ENCODE measurements at regions of chr19 and their contacts with region 1.

Region 1: GRCh38 chr19:53898636-53899341 is 10.3 kb upstream of the CACNG7 start:
- DNase-seq: no peak
- H3K4me3 Mint-ChIP-seq: no peak overlapping the region
- H3K27ac Mint-ChIP-seq: no peak overlapping the region
- H3K4me1 Mint-ChIP-seq: no peaks in the 10 kb centered on the region
- H3K27me3 Mint-ChIP-seq: peaks cover 6% of the 10 kb centered on the region

Region 2: GRCh38 chr19:53912653-53913052 is 13.9 kb after region 1 on chr19:
- intact Hi-C with region 1: no loop called
- DNase-seq: no peak
- H3K4me3 Mint-ChIP-seq: no peak overlapping the region
- H3K27ac Mint-ChIP-seq: no peak overlapping the region
- H3K4me1 Mint-ChIP-seq: peaks cover 11% of the 10 kb centered on the region
- H3K27me3 Mint-ChIP-seq: peaks cover 31% of the 10 kb centered on the region

Region 3: GRCh38 chr19:54707962-54708361 is 809.2 kb after region 1 on chr19:
- intact Hi-C with region 1: loop called (anchors 5 kb)
- DNase-seq: no peak
- H3K4me3 Mint-ChIP-seq: no peak overlapping the region
- H3K27ac Mint-ChIP-seq: no peak overlapping the region
- H3K4me1 Mint-ChIP-seq: peaks cover 10% of the 10 kb centered on the region
- H3K27me3 Mint-ChIP-seq: no peaks in the 10 kb centered on the region

Measured in activated T-helper 1 cell treated with anti-CD3 and anti-CD28 coated beads, Interleukin-12 subunit alpha, Interleukin-12 subunit beta, Interleukin-2, Interleukin-4 antibody, amounts not matched to agents 30 ng/mL and 10 ng/mL and 1 ng/mL, durations not matched to agents 14 hours and 24 hours and 36 hours (primary cell).